ENCODE measurements at regions of chr19 and their contacts with region 1.

Region 1: DNA sequence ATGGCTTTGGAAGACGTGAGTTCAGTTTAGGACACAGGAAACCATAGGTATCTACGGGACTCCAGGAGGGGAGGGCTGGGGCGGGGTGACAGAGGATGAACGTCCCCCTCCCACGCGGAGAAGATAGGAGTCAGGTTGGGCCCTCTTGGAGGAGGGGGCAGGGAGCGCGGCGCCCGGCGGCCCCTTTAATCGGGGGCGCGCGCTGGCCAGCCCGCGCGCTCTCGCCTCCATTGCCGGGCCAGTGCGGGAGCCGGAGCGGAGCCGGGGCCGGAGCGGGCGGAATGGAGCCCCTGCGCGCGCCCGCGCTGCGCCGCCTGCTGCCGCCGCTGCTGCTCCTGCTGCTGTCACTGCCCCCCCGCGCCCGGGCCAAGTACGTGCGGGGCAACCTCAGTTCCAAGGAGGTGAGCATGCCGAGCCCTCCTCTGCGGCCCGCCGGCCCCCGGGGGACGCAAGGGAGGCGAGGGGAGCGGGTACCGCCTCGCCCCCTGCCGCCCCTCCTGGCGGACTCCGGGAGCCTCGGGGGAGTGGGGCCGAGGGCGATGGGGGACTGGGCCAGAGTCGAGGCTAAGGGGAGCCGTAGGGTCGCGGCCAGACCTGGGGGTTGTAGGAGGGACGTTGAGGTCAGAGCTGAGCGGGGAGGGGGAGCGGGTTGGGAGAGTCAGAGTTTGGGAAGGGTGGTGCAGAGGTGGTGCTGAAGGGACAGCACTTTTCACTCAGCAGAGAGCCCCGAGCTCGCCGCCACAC is at the start of gene TMEM145:
- DNase-seq: no peak
- ATAC-seq: peak; percentile 86 to 90
- total RNA-seq, gene TMEM145: 0.50 to 1.4 TPM

Region 2: DNA sequence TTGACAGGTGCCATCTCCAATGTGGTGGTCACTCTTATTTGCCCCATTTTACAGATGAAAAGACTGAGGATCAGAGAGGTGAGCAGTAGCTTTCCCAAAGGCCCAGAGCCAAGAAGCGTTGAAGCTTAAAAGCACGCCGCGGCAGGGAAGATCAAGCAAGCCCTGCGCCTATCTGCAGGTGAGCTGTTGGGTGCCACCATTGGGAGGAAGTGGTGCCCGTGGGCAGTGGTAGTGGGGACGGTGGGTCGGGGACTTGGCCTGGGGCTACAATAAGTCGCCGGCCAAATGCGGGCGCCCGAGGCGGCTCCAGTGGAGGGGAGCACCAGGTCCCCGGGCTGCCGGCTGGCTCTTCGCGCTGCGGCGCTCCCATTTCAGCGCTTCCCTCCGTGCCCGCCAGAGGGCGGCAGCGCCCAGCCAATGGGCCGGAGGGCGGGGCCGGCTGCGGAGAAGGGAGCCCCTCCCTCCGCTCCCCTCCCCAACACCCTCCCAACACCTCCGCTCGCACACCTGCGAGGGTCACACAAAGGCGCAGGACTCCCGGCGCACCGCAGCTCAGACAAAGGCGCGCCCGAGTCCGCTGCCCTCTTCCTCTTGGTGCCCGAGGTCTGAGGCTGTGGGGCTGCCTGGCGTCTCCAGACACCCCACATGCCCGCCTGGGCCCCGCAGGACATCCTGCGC is 180.3 kb before region 1 on chr19:
- intact Hi-C with region 1: loop called in 1 of 2 experiments (anchors 10 kb)
- DNase-seq: peak; percentile 64
- ATAC-seq: peak; percentile 83 to 87

Region 3: GRCh38 chr19:42330241-42330711 is 17.0 kb after region 1 on chr19:
- intact Hi-C with region 1: no loop called
- DNase-seq: no peak
- ATAC-seq: no peak

Region 4: DNA sequence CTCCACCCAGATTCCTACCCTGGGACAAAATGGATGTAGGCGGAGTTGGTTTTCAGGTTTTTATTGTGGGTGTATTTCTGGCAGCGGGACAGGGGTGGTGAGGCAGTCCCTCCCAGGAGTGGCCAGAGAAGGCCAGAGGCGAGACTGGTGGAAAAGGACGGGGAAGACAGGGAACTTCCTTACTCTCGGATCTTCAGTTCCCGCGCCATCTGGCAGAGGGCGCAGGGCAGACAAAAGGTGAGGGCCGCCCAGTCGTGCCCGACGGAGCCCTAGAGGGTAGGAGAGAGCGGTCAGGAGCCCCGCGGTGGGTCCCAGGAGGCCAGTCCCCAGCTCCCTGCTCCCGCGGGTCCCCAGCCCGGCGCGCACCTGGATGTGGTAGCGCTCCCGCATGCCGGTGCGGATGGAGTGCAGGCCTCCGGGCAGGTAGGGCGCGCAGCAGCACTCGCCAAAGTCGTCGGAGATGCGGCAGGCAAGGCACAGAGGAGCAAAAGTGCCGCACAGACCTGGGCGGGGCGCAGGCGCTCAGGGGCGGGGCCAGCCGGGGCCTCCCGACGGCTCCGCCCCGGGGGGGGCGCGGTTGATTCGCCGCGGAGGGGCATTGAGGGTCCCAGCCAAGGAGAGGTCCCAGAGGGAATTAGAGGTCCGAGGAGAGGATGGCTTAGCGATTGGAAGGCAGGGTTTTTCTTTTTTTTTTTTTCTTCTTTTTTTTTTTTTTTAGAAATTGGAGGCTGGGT is 73.9 kb after region 1 on chr19:
- intact Hi-C with region 1: no loop called
- DNase-seq: peak; percentile 59
- ATAC-seq: peak; percentile 84 to 88